BJ (cell line): ENCODE measurements at regions of chr2 and their contacts with region 1.

Region 1: DNA sequence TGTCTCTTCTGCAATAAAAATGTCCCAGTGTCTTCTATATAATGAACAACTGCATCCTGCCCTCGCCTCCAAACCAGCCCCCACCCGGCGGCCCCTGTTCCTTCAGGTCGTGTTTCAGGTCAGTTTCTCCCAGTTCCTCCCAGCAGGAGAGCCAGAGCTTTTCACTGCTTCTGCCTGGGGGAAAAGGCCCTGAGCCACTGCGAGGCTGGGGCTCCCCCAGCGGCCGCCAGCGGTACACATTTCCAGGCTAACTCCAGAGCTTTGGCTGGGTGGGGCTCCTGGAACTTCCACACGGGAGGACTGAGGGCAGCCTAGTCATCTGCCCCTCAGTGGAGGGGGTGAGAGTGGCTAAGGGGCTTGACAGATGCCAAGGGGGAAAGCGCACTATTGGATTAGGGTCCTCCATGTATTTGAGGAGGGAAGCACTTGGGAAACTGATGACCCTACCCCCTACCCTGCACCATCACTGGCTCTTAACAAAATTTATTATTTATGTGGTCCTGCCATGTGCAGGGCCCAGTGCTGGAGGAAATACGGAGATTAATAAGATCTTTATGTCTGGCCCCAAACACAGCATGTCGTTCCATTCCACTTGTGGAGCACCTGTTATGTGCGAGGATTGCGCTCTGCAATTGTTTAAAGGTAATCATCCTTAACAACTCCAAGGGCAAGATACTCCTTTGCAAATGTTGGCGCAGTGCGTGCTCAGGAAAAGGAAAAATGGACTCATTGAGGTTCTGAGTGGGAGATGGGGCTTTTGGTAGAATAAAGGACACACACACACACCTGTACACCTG is 17.3 kb upstream of the CYS1 start:
- DNase-seq: no peak
- H3K4me3 ChIP-seq: no peak overlapping the region
- H3K27me3 ChIP-seq: no peaks in the 10 kb centered on the region
- CTCF ChIP-seq: peak; percentile 99

Region 2: GRCh38 chr2:10057231-10058107 is 40.1 kb before region 1 on chr2:
- CTCF ChIA-PET with region 1: interaction called, 15 read pairs
- POLR2A ChIA-PET with region 1: no interaction called
- DNase-seq: no peak
- H3K4me3 ChIP-seq: peak overlapping the region; percentile 3; the same call in 1 of the 2 replicates
- H3K27me3 ChIP-seq: no peaks in the 10 kb centered on the region; the same call in 1 of the 2 replicates
- CTCF ChIP-seq: no peak

Region 3: DNA sequence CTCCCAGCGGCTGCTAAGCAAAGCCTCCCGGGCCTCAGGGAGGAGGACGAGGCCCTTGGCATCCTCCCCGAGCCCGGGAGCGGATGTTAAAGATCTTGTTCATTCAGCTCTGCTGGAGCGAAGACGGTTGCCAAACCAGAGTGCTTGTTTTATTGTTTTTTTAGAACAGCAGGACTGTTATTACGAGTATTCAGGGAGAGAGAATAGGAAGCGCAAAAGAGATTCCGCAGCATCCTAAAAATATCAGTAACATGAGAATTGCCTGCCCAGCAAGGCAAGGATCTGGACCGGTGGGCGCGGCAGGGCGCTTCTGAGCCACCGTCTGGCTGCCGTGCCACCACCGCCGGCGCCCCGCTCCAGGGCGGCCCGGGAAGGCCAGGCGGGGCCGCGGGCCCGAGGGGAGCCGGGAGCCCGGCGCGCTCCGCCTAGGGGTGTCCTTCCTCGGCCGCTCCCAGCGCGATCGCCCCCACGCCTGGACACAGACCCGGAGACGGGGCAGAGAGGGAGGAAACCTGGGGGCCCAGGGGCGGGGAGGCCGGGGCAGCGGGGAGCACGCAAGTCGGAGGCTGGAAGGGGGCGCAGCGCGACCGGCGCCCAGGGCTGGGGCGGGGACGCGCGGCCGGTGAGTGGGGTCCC is 18.2 kb before region 1 on chr2:
- CTCF ChIA-PET with region 1: interaction called, 118 read pairs
- POLR2A ChIA-PET with region 1: no interaction called
- DNase-seq: peak; percentile 27
- H3K4me3 ChIP-seq: peak overlapping the region; percentile 44
- H3K27me3 ChIP-seq: peaks cover 14% of the 10 kb centered on the region
- CTCF ChIP-seq: no peak

Region 4: GRCh38 chr2:10109311-10109710 is 11.8 kb after region 1 on chr2:
- CTCF ChIA-PET with region 1: interaction called, 24 read pairs
- POLR2A ChIA-PET with region 1: no interaction called
- DNase-seq: no peak
- H3K4me3 ChIP-seq: no peak overlapping the region
- H3K27me3 ChIP-seq: no peaks in the 10 kb centered on the region
- CTCF ChIP-seq: no peak

Region 5: DNA sequence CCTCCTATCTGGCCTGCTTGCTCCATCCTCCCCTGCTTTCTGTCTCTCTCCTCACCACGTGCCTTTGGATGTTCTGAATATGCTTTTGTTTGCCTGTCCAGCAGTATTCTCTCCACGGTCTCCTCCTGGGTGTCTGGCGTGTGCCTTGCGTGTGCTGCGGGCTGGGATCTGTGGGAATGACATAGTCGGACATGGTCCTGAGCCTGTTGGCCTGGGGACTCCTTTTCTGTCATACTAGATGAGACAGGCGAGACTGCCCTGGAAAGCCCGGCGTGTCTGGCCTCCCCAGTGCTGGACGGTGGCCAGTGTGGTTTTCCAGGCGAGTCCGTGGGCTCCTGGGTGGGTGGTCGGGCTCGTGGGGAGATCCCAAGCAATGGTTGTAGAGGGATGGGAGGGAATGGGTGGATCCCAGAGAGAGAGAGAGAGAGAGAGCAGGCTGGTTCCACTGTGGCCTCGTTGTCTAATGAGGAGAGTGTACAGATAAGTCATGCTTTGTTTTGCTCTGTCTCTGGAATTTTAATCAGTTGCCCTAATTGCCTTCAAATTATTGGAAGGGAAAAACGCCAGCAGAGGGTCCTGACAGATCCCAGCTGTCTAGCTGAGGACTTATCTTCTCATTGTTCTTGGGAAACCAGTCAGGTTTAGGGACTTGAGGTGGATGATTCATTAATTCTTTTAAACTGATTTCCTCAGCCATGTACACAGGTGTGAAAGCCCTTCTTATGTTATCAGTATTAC is 263.5 kb after region 1 on chr2:
- CTCF ChIA-PET with region 1: no interaction called
- POLR2A ChIA-PET with region 1: no interaction called
- DNase-seq: no peak
- H3K4me3 ChIP-seq: no peak overlapping the region
- H3K27me3 ChIP-seq: no peaks in the 10 kb centered on the region
- CTCF ChIP-seq: no peak